ENCODE measurements at regions of chr5 and their contacts with region 1.

Region 1: DNA sequence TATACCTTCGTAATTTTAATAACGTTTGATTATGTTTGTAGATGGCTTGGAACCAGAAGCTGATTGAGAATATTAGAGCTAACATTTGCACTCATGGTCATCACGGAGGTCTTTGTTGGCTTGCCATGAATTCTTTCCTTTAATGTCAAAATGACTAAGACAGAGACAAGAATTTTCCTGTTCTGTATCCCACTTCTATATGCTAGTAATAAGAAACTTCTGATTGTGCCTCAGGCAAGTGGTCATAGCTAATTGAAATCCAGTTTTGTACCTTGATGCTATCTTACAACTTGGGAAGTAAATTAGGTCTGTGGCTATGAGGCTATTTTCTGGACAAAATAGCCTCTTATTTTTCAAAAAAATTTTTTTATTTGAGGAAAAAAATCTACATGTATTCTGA is 167.6 kb downstream of the RANBP17 start:
- DNase-seq: no peak
- H3K4me3 ChIP-seq: no peak overlapping the region
- H3K27ac ChIP-seq: no peak overlapping the region
- H3K4me1 ChIP-seq: no peaks in the 10 kb centered on the region
- H3K27me3 ChIP-seq: no peaks in the 10 kb centered on the region
- CTCF ChIP-seq: no peak
- POLR2A ChIP-seq: no peak

Region 2: DNA sequence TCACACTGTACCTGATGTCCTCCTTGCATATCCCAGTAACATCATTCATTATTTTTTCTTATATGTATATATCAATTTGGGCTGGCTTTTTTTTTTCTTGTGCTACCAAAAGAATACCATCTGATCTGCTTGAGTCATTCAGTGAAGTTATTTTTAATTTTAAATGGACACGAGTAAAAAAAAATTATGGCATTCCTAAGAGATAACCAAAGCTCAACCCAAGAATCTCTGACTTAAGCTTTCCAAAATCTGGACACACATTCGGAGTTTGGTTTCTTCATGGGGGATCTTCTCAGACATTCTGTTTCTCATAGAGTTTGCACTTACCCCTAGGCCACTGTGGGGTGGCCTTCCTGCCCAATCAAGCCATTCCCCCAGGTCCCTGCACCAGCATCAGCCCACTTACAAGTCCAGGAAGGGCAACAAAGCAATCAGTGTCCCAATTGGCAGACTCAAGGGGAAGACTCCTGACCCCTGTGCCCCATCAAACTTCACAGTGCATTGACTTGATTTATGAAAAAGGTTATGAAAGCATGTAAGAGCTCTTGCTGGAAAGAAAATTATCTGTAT is 1495.0 kb before region 1 on chr5:
- intact Hi-C with region 1: no loop called
- DNase-seq: no peak
- H3K4me3 ChIP-seq: no peak overlapping the region
- H3K27ac ChIP-seq: peak overlapping the region in 1 of 2 donors; percentile 52
- H3K4me1 ChIP-seq: no peaks in the 10 kb centered on the region
- H3K27me3 ChIP-seq: no peaks in the 10 kb centered on the region
- CTCF ChIP-seq: no peak
- POLR2A ChIP-seq: no peak

Region 3: GRCh38 chr5:171092194-171092593 is 62.8 kb after region 1 on chr5:
- intact Hi-C with region 1: loop called (anchors 5 kb)
- DNase-seq: no peak
- H3K4me3 ChIP-seq: no peak overlapping the region
- H3K27ac ChIP-seq: no peak overlapping the region
- H3K4me1 ChIP-seq: no peaks in the 10 kb centered on the region
- H3K27me3 ChIP-seq: no peaks in the 10 kb centered on the region
- CTCF ChIP-seq: no peak
- POLR2A ChIP-seq: no peak